ENCODE measurements at regions of chr5 and their contacts with region 1.

Region 1: GRCh38 chr5:136769900-136770684 is 404.7 kb upstream of the TRPC7 start:
- DNase-seq: peak; percentile 53 to 87
- H3K4me3 ChIP-seq: no peak overlapping the region
- H3K27ac ChIP-seq: no peak overlapping the region
- H3K4me1 ChIP-seq: peaks cover 0 to 2% (median 1%) of the 10 kb centered on the region in 4 experiments; a peak in 3 of 7 replicates
- H3K27me3 ChIP-seq: peaks cover 0 to 1% (median 0%) of the 10 kb centered on the region in 4 experiments; a peak in 1 of 7 replicates
- CTCF ChIP-seq: peak; percentile 87 to 96 (median 91)
- EP300 ChIP-seq: no peak
- POLR2A ChIP-seq: no peak
- RAD21 ChIP-seq: peak; percentile 99 to 100

Region 2: GRCh38 chr5:136374003-136374402 is 396.1 kb before region 1 on chr5:
- CTCF ChIA-PET with region 1: interaction called, 13 read pairs
- POLR2A ChIA-PET with region 1: no interaction called
- DNase-seq: no peak
- H3K4me3 ChIP-seq: no peak overlapping the region
- H3K27ac ChIP-seq: no peak overlapping the region
- H3K4me1 ChIP-seq: no peaks in the 10 kb centered on the region
- H3K27me3 ChIP-seq: no peaks in the 10 kb centered on the region
- CTCF ChIP-seq: peak in 2 of 3 experiments; percentile 66 to 77; a peak in 3 of 4 replicates
- EP300 ChIP-seq: no peak
- POLR2A ChIP-seq: no peak
- RAD21 ChIP-seq: peak; percentile 82 to 89

Region 3: GRCh38 chr5:136686192-136686872 is 83.8 kb before region 1 on chr5:
- CTCF ChIA-PET with region 1: interaction called, 15 read pairs
- POLR2A ChIA-PET with region 1: no interaction called
- DNase-seq: peak in 1 of 2 experiments; percentile 49
- H3K4me3 ChIP-seq: no peak overlapping the region
- H3K27ac ChIP-seq: no peak overlapping the region
- H3K4me1 ChIP-seq: no peaks in the 10 kb centered on the region
- H3K27me3 ChIP-seq: no peaks in the 10 kb centered on the region; a peak in 1 of 7 replicates
- CTCF ChIP-seq: peak in 2 of 3 experiments; percentile 65 to 67; a peak in 3 of 4 replicates
- EP300 ChIP-seq: no peak
- POLR2A ChIP-seq: no peak
- RAD21 ChIP-seq: peak; percentile 80 to 85

Region 4: DNA sequence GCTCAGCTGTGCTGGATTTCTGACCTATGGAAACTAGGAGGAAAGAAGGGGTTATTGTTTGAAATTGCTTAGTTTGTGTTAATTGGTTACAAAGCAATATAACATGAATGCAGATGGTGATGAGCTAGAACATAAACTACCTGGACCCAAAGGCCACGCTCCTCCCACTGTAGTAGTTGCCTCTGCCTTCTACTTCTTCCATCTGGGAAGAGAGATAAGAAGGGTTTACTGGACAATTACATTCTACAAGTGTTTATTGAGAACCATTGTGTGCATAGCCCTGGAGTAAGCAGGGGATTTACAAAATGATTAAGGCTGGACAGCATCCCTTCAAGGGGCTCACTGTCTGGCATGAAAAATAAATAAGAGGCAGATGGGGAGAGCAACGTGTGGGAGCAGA is 49.4 kb before region 1 on chr5:
- CTCF ChIA-PET with region 1: interaction called, 13 read pairs
- POLR2A ChIA-PET with region 1: no interaction called
- DNase-seq: no peak
- H3K4me3 ChIP-seq: no peak overlapping the region
- H3K27ac ChIP-seq: no peak overlapping the region
- H3K4me1 ChIP-seq: no peaks in the 10 kb centered on the region
- H3K27me3 ChIP-seq: no peaks in the 10 kb centered on the region
- CTCF ChIP-seq: no peak
- EP300 ChIP-seq: no peak
- POLR2A ChIP-seq: no peak
- RAD21 ChIP-seq: no peak

Region 5: DNA sequence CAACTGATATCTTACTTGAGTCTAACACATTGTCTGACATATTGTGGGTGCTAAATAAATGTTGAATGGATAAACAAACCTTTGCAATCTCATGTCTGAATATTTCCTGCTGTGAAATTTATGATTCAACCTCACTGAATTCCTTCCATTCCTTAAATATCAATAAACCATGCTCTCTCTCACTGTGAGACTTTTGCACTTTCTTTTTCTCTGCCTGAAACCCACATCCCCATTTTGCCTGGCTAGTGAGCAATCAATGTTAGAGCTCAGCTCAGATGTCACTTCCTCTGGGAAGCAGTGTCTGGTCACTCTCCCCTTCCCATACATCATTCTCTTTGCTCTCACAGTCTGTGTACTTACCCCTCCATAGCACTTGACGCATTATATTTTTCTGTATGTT is 21.1 kb before region 1 on chr5:
- CTCF ChIA-PET with region 1: no interaction called
- POLR2A ChIA-PET with region 1: no interaction called
- DNase-seq: no peak
- H3K4me3 ChIP-seq: no peak overlapping the region
- H3K27ac ChIP-seq: no peak overlapping the region
- H3K4me1 ChIP-seq: no peaks in the 10 kb centered on the region
- H3K27me3 ChIP-seq: no peaks in the 10 kb centered on the region
- CTCF ChIP-seq: no peak
- EP300 ChIP-seq: no peak
- POLR2A ChIP-seq: no peak
- RAD21 ChIP-seq: no peak

Region 6: GRCh38 chr5:136810261-136810801 is 40.2 kb after region 1 on chr5:
- CTCF ChIA-PET with region 1: no interaction called
- POLR2A ChIA-PET with region 1: no interaction called
- DNase-seq: no peak
- H3K4me3 ChIP-seq: no peak overlapping the region
- H3K27ac ChIP-seq: no peak overlapping the region
- H3K4me1 ChIP-seq: no peaks in the 10 kb centered on the region
- H3K27me3 ChIP-seq: no peaks in the 10 kb centered on the region
- CTCF ChIP-seq: no peak
- EP300 ChIP-seq: no peak
- POLR2A ChIP-seq: no peak
- RAD21 ChIP-seq: no peak

Region 7: DNA sequence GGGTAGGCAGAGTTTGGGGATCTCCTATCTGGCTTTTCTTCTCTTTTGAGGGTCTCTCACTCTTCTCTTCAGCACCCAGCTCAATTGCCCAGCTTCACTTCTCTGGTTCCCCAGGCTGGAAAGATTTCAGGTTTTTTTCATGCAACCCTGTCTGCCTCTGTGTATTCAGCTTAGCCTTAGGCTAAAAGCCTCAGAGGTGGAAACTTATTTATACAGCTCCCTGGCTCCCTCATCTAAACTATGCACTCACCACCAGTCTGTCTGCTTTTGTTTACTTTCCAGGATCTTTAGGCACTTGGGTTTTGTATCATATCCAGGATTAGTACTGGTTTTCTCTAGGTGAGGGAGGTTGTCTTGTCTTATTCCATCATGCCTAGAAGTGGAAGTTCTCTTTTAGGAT is 135.5 kb after region 1 on chr5:
- CTCF ChIA-PET with region 1: no interaction called
- POLR2A ChIA-PET with region 1: no interaction called
- DNase-seq: no peak
- H3K4me3 ChIP-seq: no peak overlapping the region
- H3K27ac ChIP-seq: no peak overlapping the region
- H3K4me1 ChIP-seq: peaks cover 0 to 8% (median 1%) of the 10 kb centered on the region in 4 experiments; a peak in 3 of 7 replicates
- H3K27me3 ChIP-seq: no peaks in the 10 kb centered on the region
- CTCF ChIP-seq: no peak
- EP300 ChIP-seq: no peak
- POLR2A ChIP-seq: no peak
- RAD21 ChIP-seq: no peak

Measured in H1 (cell line).